ENCODE measurements at regions of chr14 and their contacts with region 1.

Region 1: DNA sequence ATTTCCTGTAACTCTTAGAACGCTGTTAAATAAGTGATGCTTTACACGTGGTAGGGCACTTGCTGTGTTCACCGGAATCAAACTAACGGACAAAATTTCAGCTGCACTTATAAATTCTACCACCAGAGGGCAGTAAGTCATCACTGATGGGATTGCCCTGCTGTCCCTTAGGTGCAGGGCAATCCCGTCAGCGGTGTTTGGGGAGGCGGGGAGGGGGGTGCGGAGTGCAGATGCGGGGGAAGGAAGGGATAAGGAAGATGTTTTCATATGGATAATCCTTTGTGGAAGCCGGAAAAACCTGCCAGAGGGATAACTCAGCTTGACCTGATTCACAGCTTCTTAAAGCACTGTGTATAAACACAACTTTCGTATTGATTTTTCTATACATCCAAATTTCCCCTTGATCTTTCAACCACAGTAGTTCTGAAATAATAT is 21.7 kb upstream of the SLC10A1 start:
- DNase-seq: peak; percentile 62
- H3K4me3 ChIP-seq: no peak overlapping the region
- H3K27ac ChIP-seq: no peak overlapping the region
- H3K4me1 ChIP-seq: peaks cover 4% of the 10 kb centered on the region
- H3K27me3 ChIP-seq: no peaks in the 10 kb centered on the region
- CTCF ChIP-seq: peak; percentile 67 to 82

Region 2: GRCh38 chr14:69586404-69586803 is 232.4 kb before region 1 on chr14:
- CTCF ChIA-PET with region 1: no interaction called
- dilution Hi-C with region 1: no loop called
- in situ Hi-C with region 1: no loop called
- intact Hi-C with region 1: loop called (anchors 5 kb)
- DNase-seq: no peak
- H3K4me3 ChIP-seq: no peak overlapping the region
- H3K27ac ChIP-seq: no peak overlapping the region
- H3K4me1 ChIP-seq: no peaks in the 10 kb centered on the region
- H3K27me3 ChIP-seq: no peaks in the 10 kb centered on the region
- CTCF ChIP-seq: no peak

Region 3: GRCh38 chr14:69755784-69756183 is 63.0 kb before region 1 on chr14:
- CTCF ChIA-PET with region 1: interaction called, 26 read pairs
- dilution Hi-C with region 1: no loop called
- in situ Hi-C with region 1: no loop called
- intact Hi-C with region 1: no loop called
- DNase-seq: no peak
- H3K4me3 ChIP-seq: no peak overlapping the region
- H3K27ac ChIP-seq: no peak overlapping the region
- H3K4me1 ChIP-seq: no peaks in the 10 kb centered on the region
- H3K27me3 ChIP-seq: no peaks in the 10 kb centered on the region
- CTCF ChIP-seq: no peak

Region 4: GRCh38 chr14:69928111-69928523 is 109.3 kb after region 1 on chr14:
- CTCF ChIA-PET with region 1: interaction called, 16 read pairs
- dilution Hi-C with region 1: no loop called
- in situ Hi-C with region 1: no loop called
- intact Hi-C with region 1: no loop called
- DNase-seq: no peak
- H3K4me3 ChIP-seq: no peak overlapping the region
- H3K27ac ChIP-seq: no peak overlapping the region
- H3K4me1 ChIP-seq: no peaks in the 10 kb centered on the region
- H3K27me3 ChIP-seq: no peaks in the 10 kb centered on the region
- CTCF ChIP-seq: no peak

Region 5: DNA sequence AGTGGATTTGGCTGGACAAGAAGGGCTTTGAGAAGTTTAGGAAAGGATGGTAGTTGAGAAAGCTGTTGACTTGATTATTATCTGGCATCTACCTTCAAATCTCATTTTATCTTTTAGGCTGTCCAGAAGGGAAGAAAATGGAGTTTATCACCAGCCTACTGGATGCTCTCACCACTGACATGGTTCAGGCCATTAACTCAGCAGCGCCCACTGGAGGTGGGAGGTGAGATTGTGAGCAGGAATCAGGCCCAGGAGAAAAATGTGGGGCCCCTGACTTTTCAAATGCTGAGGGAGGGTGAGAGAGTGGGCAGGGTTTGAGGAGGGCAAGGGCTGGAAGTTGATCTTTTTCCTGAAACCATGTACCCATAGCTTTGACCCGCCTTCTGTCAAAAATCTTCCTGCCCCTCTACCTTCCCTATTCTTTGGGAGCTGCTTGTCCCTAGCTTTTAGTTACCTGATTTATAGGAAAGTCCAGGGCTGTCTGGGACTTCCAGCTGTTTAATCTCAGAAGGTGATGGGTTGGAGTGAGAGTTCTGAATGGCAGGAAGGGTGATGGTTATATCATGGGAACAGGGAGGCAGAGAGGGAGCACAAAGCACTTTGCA is 194.6 kb after region 1 on chr14:
- CTCF ChIA-PET with region 1: no interaction called
- dilution Hi-C with region 1: no loop called
- in situ Hi-C with region 1: no loop called
- intact Hi-C with region 1: loop called (anchors 1 kb)
- DNase-seq: peak; percentile 37
- H3K4me3 ChIP-seq: no peak overlapping the region
- H3K27ac ChIP-seq: no peak overlapping the region
- H3K4me1 ChIP-seq: peaks cover 38% of the 10 kb centered on the region
- H3K27me3 ChIP-seq: no peaks in the 10 kb centered on the region
- CTCF ChIP-seq: peak; percentile 84 to 90

Region 6: DNA sequence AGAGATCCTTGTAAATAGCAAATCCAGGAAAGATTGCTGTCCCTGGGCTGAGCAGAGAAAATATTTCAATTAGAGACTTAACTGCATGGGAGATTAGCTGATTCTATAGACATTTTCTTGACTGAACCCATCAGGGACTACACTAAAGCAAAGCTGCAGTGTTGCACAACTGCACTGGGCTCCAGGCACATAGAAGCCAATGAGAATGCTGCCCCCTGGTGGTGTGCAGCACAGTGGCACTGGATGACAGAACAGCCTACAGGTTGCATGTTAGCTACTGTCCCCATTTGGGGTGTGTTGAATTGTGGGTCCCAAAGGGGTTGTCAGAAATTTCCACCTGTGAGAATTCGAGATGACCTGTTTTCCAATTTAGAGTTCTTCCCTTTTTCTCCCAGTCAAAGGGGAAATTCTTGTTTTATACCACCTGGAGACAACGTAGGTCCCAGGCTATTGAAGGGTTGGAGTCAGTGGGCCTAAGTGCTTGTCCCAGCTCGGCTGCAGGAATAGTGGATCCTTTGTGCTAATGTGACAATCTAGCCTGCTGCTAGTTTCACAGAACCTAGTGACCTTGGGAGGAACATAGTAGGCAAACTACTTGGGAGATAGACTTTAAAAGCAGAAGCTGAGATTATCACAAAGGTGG is 255.3 kb after region 1 on chr14:
- CTCF ChIA-PET with region 1: interaction called, 3 read pairs
- dilution Hi-C with region 1: no loop called
- in situ Hi-C with region 1: no loop called
- intact Hi-C with region 1: loop called (anchors 1 kb)
- DNase-seq: peak; percentile 68
- H3K4me3 ChIP-seq: no peak overlapping the region
- H3K27ac ChIP-seq: no peak overlapping the region
- H3K4me1 ChIP-seq: no peaks in the 10 kb centered on the region
- H3K27me3 ChIP-seq: no peaks in the 10 kb centered on the region
- CTCF ChIP-seq: peak; percentile 96 to 97

Region 7: DNA sequence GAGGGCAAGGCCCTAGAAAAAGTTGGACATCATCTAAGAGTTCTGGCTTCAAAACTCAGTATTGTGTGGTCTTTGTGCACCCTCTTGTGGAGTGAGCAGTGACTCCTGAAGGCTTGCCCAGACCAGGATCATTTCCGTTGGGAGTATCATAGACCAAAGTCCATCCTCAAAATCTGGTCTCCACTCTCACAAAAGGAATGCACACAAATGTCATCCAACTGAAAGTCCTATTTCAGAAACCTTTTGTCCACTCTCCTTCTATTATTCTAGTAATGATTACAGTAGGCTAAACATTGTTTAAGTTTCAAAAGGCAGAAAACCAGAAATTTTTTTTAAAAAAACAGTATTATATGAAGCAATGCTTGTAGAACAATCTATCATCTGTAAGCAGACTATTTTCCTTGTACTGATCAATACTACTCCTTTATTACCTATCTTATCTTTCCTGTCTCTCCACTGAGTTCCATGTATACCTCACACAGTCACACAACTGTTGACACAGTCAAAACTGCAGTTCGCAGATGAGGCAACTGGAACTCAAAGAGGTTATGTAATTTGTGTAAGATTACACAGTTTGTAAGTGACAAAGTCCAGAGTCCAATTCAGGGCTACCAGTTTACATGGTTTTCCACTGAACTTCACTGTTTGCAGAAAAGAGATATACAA is 499.3 kb after region 1 on chr14:
- CTCF ChIA-PET with region 1: no interaction called
- dilution Hi-C with region 1: no loop called
- in situ Hi-C with region 1: loop called in 1 of 2 experiments (anchors 25 kb)
- intact Hi-C with region 1: loop called (anchors 1 kb)
- DNase-seq: peak; percentile 48
- H3K4me3 ChIP-seq: no peak overlapping the region
- H3K27ac ChIP-seq: no peak overlapping the region
- H3K4me1 ChIP-seq: peaks cover 9% of the 10 kb centered on the region
- H3K27me3 ChIP-seq: no peaks in the 10 kb centered on the region
- CTCF ChIP-seq: peak; percentile 42 to 65

Measured in mammary epithelial cell (primary cell).